AG04450 (cell line): ENCODE measurements at regions of chr1 and their contacts with region 1.

Region 1: GRCh38 chr1:221435504-221435904 is 306.4 kb downstream of the DUSP10 start:
- DNase-seq: peak; percentile 65
- H3K4me3 ChIP-seq: no peak overlapping the region
- H3K27ac ChIP-seq: no peak overlapping the region
- H3K27me3 ChIP-seq: no peaks in the 10 kb centered on the region
- CTCF ChIP-seq: peak; percentile 96

Region 2: GRCh38 chr1:220810179-220810653 is 625.3 kb before region 1 on chr1:
- CTCF ChIA-PET with region 1: interaction called, 15 read pairs
- POLR2A ChIA-PET with region 1: no interaction called
- DNase-seq: peak; percentile 66
- H3K4me3 ChIP-seq: peak overlapping the region; percentile 25; the same call in 1 of the 2 replicates
- H3K27ac ChIP-seq: no peak overlapping the region
- H3K27me3 ChIP-seq: peaks cover 9% of the 10 kb centered on the region
- CTCF ChIP-seq: peak; percentile 97

Region 3: DNA sequence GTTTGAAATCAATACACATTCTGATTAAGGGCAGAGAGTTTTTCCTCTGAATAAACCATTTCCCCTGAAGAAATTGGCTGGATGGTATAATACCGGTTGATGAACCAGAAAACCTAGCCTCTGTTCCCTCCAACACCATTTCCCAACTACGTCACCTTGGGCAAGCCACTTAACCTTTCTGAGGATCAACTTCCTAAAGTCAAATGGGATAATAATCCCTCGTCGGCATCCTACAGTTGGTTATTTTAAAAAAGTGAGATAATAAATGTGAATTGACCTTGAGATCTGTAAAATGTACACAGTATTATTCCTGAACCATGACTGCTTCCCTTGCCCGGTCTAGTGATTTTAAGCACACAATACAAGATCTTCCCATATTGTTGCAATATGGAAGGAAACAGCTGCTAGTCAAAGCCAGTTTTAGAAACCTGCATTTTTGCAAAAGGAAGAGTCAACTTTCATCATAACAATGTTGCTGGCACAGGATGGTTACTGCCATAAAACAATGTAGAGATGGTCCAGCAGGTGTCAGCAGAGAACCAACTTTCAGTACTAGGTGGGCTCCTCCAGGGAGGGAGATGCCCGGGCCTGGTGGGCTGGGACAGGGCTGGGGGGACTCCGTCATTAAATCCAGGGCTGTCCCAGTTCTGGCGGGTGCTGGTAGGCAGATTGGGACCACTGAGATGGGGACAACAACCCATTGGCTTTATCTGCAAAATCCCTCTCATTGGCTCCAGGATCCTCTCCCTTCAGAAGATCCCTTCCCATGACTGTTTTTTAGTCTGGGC is 561.4 kb before region 1 on chr1:
- CTCF ChIA-PET with region 1: interaction called, 37 read pairs
- POLR2A ChIA-PET with region 1: interaction called, 3 read pairs
- DNase-seq: no peak
- H3K4me3 ChIP-seq: no peak overlapping the region
- H3K27ac ChIP-seq: no peak overlapping the region
- H3K27me3 ChIP-seq: no peaks in the 10 kb centered on the region
- CTCF ChIP-seq: peak; percentile 76

Region 4: GRCh38 chr1:221188458-221188857 is 247.0 kb before region 1 on chr1:
- CTCF ChIA-PET with region 1: interaction called, 10 read pairs
- POLR2A ChIA-PET with region 1: no interaction called
- DNase-seq: no peak
- H3K4me3 ChIP-seq: no peak overlapping the region
- H3K27ac ChIP-seq: no peak overlapping the region
- H3K27me3 ChIP-seq: no peaks in the 10 kb centered on the region
- CTCF ChIP-seq: no peak

Region 5: GRCh38 chr1:221263831-221264767 is 171.4 kb before region 1 on chr1:
- CTCF ChIA-PET with region 1: interaction called, 168 read pairs
- POLR2A ChIA-PET with region 1: no interaction called
- DNase-seq: peak; percentile 56
- H3K4me3 ChIP-seq: no peak overlapping the region
- H3K27ac ChIP-seq: no peak overlapping the region
- H3K27me3 ChIP-seq: peaks cover 2% of the 10 kb centered on the region
- CTCF ChIP-seq: peak; percentile 64

Region 6: GRCh38 chr1:221449801-221450470 is 14.4 kb after region 1 on chr1:
- CTCF ChIA-PET with region 1: interaction called, 12 read pairs
- POLR2A ChIA-PET with region 1: no interaction called
- DNase-seq: no peak
- H3K4me3 ChIP-seq: no peak overlapping the region
- H3K27ac ChIP-seq: no peak overlapping the region
- H3K27me3 ChIP-seq: no peaks in the 10 kb centered on the region
- CTCF ChIP-seq: no peak

Region 7: DNA sequence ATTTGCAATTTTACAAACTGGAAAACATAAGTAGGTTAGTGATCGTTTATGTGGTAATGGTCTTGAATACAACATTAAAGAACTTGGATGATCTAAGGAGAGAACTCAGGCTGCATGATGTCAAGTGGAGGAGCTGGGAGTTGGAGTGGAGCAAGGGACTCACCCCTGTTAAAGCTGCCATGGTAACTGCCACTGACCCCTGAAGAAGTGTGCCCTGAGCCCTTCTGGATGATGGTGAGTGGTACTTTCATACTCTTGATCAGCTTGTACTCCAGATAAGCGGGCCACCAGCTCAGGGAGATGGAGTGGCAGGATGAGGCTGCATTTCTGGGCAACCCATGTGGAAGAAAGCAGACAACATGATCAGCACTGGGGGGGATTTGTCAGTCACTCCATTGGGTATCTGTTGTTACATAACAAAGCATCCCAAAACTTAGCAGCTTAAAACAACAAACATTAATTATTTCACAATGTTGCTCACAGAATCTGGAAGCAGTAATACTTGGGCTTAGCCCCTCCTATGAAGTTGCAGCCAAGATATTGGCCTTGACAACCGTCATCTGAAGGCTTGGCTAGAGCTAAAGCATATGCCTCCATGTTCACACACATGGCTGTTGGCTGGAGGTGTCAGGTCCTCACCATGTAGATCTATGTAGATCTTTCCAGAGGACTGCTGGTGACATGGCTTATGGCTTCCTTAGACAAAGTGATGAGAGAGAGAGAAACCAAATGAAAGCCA is 92.6 kb after region 1 on chr1:
- CTCF ChIA-PET with region 1: no interaction called
- POLR2A ChIA-PET with region 1: no interaction called
- DNase-seq: no peak
- H3K4me3 ChIP-seq: no peak overlapping the region
- H3K27ac ChIP-seq: no peak overlapping the region
- H3K27me3 ChIP-seq: no peaks in the 10 kb centered on the region
- CTCF ChIP-seq: no peak

Region 8: DNA sequence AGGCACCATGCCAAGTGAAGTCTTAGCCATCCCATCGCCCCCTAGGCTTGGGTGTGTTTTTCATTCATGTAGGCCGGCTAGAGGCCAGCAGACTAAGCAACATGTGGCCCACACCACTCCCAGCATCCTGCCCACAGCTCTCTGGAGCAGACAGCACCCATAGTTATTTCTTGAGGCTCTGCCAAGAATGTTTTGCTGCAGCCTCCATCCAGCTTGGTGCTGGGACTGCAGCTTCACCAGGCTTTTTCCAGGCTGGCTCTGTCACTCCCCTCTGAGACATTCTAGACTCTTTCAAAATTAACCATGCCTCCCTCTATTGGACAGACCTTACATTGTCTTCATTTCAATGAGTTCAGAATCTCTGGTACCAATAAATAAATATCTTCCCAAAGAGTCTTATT is 202.1 kb after region 1 on chr1:
- CTCF ChIA-PET with region 1: no interaction called
- POLR2A ChIA-PET with region 1: no interaction called
- DNase-seq: no peak
- H3K4me3 ChIP-seq: no peak overlapping the region
- H3K27ac ChIP-seq: no peak overlapping the region
- H3K27me3 ChIP-seq: no peaks in the 10 kb centered on the region
- CTCF ChIP-seq: 0 out of 2 replicates have a peak, but pooled peaks have one; percentile 7